ENCODE measurements at regions of chr15 and their contacts with region 1.

Region 1: DNA sequence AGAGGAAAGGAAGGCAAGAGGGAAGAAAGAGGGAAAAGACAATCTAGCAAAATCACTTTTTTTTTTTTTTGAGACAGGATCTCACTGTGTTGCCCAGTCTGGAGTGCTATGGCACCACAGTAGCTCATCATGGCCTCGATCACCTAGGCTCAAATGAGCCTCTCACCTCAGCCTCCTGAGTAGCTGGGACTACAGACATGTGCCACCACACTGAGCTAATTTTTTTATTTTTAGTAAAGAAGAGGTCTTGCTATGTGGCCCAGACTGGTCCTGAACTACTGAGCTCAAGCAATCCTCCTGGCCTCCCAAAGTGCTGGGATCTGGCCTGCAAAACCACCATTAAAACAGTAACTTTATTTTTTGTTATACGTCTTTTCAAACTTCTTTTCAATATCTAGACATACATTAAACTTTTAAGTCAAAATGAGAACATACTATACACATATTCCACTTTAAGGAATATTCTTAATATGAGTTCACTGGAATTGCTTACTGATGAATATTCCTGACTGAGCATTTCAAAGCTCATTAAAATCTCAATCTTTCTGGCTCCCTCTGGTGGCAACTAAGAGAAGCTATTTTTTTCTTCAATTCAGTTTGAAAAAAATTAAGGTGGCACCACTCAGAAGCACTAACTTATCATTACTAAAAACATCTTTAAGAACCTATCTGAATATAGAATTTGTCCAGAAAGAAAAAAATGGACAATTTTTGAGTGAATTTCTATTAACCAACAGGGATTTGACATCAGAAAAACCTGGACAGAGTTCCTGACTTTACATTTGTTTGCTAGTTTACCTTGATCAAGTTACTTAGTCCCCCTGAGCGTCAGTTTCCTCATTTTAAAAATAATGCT is 40.9 kb downstream of the UACA start:
- DNase-seq: no peak

Region 2: GRCh38 chr15:69475769-69476358 is 1246.6 kb before region 1 on chr15:
- intact Hi-C with region 1: loop called (anchors 10 kb)
- DNase-seq: peak; percentile 62 to 95 (median 85)

Region 3: GRCh38 chr15:70569091-70569621 is 153.3 kb before region 1 on chr15:
- intact Hi-C with region 1: loop called (anchors 10 kb)
- DNase-seq: peak in 4 of 10 donors; percentile 17 to 58 (median 26)

Region 4: GRCh38 chr15:70679919-70680231 is 42.6 kb before region 1 on chr15:
- intact Hi-C with region 1: loop called (anchors 1 kb)
- DNase-seq: no peak

Region 5: DNA sequence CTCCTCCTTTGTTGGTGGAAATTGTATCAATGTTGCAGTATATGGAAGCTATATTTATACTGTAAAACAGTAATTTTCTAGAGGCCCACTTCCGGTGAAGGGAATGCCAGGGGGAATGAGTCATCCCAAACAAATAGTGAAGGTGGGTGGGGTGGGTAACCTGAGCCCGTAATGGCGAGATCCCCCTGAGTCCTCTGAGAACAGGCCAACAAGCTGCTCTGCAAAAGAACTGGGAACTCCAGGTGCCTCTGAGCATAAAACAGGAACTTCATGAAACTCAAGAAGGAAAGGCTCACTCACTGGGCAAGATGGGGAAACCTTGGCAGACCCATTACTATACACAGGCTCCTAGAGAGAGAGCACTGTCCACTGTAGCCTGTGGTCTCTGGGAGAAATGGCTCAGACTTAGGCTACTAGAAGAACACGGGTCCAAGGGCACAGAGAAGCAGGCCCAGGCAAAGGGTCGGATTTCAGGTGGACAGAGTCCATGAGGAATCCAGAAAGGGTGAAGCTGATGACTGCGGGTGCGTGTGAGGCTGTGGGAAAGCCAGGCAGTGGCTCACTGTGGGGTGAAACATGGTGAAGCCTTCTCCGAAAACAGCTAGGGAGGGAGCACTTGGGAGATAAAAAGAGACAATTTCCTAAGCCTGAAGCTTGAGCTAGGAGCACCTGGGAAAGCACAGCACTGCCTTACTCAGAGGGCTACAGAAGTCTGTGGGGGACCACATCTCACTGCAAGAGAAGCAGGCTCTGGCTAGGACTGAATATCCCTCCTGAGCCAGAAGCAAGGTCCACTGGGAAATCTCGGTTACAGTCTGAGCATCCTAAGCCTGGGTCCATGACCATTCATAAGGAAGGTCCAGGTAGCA is 111.6 kb after region 1 on chr15:
- intact Hi-C with region 1: no loop called
- DNase-seq: peak in 1 of 10 donors; percentile 31

Measured in posterior cingulate gyrus (tissue), 11 donors.